Activated B cell treated with CpG ODN at 0.5 μM for 24 hours (primary cell): ENCODE measurements at regions of chr1 and their contacts with region 1.

Region 1: DNA sequence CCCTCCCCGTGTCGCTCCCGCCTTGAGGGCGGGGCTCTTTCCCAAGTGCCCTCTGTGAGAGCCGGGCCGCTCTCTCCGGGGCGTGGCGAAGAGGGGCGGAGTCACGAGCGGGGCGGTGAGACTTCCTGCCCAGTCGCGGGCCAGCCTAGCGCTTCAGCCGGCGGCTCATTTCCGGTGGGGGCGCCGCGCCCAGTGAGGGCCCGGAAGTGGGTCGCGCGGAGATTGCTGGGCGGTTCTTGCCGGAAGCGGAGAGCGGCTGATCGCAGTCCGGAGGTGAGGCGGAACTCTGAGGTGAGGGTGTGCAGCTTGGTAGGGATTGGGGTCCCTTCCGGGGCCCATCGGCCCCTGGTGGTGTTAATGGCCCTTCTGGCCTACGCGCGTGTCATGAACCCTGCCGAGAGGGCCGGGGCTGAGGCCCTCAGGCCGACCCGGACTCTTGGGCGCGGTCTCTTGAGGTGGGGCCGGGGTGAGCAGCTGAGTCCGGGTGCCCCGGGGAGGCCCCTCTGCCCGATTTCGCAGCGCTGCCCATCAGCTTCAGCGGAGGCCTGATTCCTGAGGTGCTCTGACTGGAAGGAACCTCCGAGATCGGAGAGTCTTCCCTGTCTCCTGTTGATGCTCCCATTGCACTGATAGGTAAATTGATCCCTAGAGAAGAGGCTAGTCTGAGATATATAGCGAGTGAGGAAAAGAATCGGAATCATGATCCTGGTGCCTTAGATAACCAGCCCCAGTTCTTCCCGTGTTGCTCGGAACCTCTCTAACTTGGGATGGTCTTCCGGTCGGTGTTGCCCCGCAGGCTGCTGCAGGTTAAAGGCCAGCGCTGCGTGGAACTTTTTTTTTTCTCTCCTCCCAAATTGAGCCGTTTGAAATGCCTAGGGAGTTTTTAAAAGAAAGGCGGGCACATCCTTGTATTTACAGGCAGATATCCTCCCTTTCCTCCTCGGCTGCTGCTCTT is at the start of gene CAP1:
- DNase-seq: peak; percentile 100
- ATAC-seq: peak; percentile 85
- H3K4me3 Mint-ChIP-seq: peak within 1 kb of the TSS; percentile 98
- H3K27ac Mint-ChIP-seq: peak within 1 kb of the TSS; percentile 94
- H3K4me1 Mint-ChIP-seq: peaks cover 78% of the 10 kb centered on the region
- H3K27me3 Mint-ChIP-seq: no peaks in the 10 kb centered on the region
- CTCF ChIP-seq: no peak
- total RNA-seq, gene CAP1: 410 and 411 TPM in 2 replicates

Region 2: GRCh38 chr1:39919545-39919944 is 121.2 kb before region 1 on chr1:
- CTCF ChIA-PET with region 1: interaction called, 11 read pairs
- POLR2A ChIA-PET with region 1: interaction called, 12 read pairs
- intact Hi-C with region 1: no loop called
- DNase-seq: peak; percentile 22
- ATAC-seq: peak; percentile 99
- H3K4me3 Mint-ChIP-seq: no peak overlapping the region
- H3K27ac Mint-ChIP-seq: no peak overlapping the region
- H3K4me1 Mint-ChIP-seq: peaks cover 2% of the 10 kb centered on the region
- H3K27me3 Mint-ChIP-seq: no peaks in the 10 kb centered on the region
- CTCF ChIP-seq: no peak

Region 3: GRCh38 chr1:39992234-39992633 is 48.6 kb before region 1 on chr1:
- CTCF ChIA-PET with region 1: no interaction called
- POLR2A ChIA-PET with region 1: no interaction called
- intact Hi-C with region 1: no loop called
- DNase-seq: no peak
- ATAC-seq: no peak
- H3K4me3 Mint-ChIP-seq: no peak overlapping the region
- H3K27ac Mint-ChIP-seq: no peak overlapping the region
- H3K4me1 Mint-ChIP-seq: peaks cover 23% of the 10 kb centered on the region
- H3K27me3 Mint-ChIP-seq: no peaks in the 10 kb centered on the region
- CTCF ChIP-seq: no peak

Region 4: DNA sequence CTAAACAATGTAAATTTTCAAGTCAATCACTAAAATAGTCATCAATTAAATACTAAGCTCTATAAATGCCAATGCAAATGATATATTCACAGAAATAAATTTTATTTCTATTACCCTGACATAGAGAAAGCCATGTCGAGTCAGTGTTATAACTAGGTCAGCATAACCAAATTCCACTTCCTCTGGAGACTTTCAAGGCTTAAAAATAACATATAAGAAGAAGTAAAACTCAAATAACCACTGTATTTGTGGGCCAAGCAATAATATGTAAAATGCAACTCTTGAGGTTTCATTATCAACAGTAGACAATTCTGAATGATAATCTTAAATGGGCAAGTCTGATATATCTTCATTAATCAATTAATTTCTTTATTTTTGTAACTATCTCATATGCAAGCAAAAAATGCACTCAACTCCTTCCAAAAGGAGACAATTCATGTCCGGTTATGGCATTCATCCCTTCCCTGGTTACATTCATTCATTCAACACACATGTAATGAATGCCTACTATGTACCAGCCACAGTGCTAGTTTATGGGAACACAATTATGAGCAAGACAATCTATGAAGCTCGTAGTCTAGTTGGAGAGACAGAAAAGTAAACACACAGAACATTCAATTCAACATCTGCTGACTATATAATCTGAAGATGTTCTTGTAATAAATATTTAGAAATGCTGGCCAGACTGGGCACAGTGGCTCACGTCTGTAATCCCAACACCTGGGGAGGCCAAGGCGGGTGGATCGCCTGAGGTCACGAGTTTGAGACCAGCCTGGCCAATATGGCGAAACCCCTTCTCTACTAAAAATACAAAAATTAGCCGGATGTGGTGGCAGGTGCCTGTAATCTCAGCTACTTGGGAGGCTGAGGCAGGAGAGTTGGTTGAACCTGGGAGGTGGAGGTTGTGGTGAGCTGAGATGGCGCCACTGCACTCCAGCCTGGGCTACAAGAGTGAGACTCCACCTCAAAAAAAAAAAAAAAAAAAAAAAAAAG is 37.3 kb before region 1 on chr1:
- CTCF ChIA-PET with region 1: interaction called, 7 read pairs
- POLR2A ChIA-PET with region 1: interaction called, 33 read pairs
- intact Hi-C with region 1: loop called (anchors 2 kb)
- DNase-seq: no peak
- ATAC-seq: peak; percentile 82
- H3K4me3 Mint-ChIP-seq: peak overlapping the region; percentile 67
- H3K27ac Mint-ChIP-seq: peak overlapping the region; percentile 59
- H3K4me1 Mint-ChIP-seq: peaks cover 63% of the 10 kb centered on the region
- H3K27me3 Mint-ChIP-seq: no peaks in the 10 kb centered on the region
- CTCF ChIP-seq: no peak

Region 5: GRCh38 chr1:40020447-40021085 is 20.2 kb before region 1 on chr1:
- CTCF ChIA-PET with region 1: no interaction called
- POLR2A ChIA-PET with region 1: interaction called, 13 read pairs
- intact Hi-C with region 1: loop called (anchors 2 kb)
- DNase-seq: no peak
- ATAC-seq: no peak
- H3K4me3 Mint-ChIP-seq: no peak overlapping the region
- H3K27ac Mint-ChIP-seq: no peak overlapping the region
- H3K4me1 Mint-ChIP-seq: peaks cover 22% of the 10 kb centered on the region
- H3K27me3 Mint-ChIP-seq: no peaks in the 10 kb centered on the region
- CTCF ChIP-seq: no peak

Region 6: GRCh38 chr1:40064797-40065499 is 24.2 kb after region 1 on chr1:
- CTCF ChIA-PET with region 1: interaction called, 12 read pairs
- POLR2A ChIA-PET with region 1: interaction called, 90 read pairs
- intact Hi-C with region 1: loop called (anchors 1 kb)
- DNase-seq: no peak
- ATAC-seq: peak; percentile 91
- H3K4me3 Mint-ChIP-seq: peak overlapping the region; percentile 55
- H3K27ac Mint-ChIP-seq: peak overlapping the region; percentile 91
- H3K4me1 Mint-ChIP-seq: peaks cover 70% of the 10 kb centered on the region
- H3K27me3 Mint-ChIP-seq: no peaks in the 10 kb centered on the region
- CTCF ChIP-seq: no peak

Region 7: DNA sequence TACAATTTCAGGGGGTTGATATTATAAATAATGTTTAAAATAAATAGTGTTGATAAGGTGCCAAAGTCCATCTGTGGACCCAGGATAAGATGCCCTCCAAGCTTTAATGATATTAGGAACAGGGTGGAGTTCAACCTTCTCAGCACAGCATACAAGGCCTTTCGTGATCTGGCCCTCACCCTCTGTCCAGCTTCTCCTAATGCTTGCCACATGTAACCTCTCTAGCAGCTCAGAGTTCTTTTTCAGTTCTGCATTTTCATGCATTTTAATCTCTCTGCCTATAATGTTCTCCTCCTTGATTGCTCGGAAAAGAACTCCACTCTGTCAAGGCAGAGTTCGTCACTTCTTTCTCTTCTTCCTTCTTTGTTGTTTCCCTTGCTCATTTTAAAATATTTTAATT is 311.3 kb after region 1 on chr1:
- CTCF ChIA-PET with region 1: no interaction called
- POLR2A ChIA-PET with region 1: no interaction called
- intact Hi-C with region 1: no loop called
- DNase-seq: no peak
- ATAC-seq: peak; percentile 94
- H3K4me3 Mint-ChIP-seq: peak overlapping the region; percentile 65
- H3K27ac Mint-ChIP-seq: peak overlapping the region; percentile 81
- H3K4me1 Mint-ChIP-seq: peaks cover 54% of the 10 kb centered on the region
- H3K27me3 Mint-ChIP-seq: no peaks in the 10 kb centered on the region
- CTCF ChIP-seq: no peak

Region 8: GRCh38 chr1:40385437-40386358 is 344.9 kb after region 1 on chr1:
- CTCF ChIA-PET with region 1: no interaction called
- POLR2A ChIA-PET with region 1: interaction called, 6 read pairs
- intact Hi-C with region 1: loop called (anchors 5 kb)
- DNase-seq: no peak
- ATAC-seq: peak; percentile 71
- H3K4me3 Mint-ChIP-seq: peak overlapping the region; percentile 74
- H3K27ac Mint-ChIP-seq: peak overlapping the region; percentile 96
- H3K4me1 Mint-ChIP-seq: peaks cover 97% of the 10 kb centered on the region
- H3K27me3 Mint-ChIP-seq: no peaks in the 10 kb centered on the region
- CTCF ChIP-seq: no peak

Region 9: GRCh38 chr1:41564738-41565475 is 1524.1 kb after region 1 on chr1:
- CTCF ChIA-PET with region 1: no interaction called
- POLR2A ChIA-PET with region 1: no interaction called
- intact Hi-C with region 1: no loop called
- DNase-seq: no peak
- ATAC-seq: no peak
- H3K4me3 Mint-ChIP-seq: no peak overlapping the region
- H3K27ac Mint-ChIP-seq: no peak overlapping the region
- H3K4me1 Mint-ChIP-seq: peaks cover 5% of the 10 kb centered on the region
- H3K27me3 Mint-ChIP-seq: no peaks in the 10 kb centered on the region
- CTCF ChIP-seq: no peak